ENCODE measurements at regions of chr12 and their contacts with region 1.

Region 1: GRCh38 chr12:111664961-111665865 is 20.5 kb downstream of the BRAP start:
- DNase-seq: no peak
- H3K4me3 ChIP-seq: no peak overlapping the region
- H3K27ac ChIP-seq: no peak overlapping the region
- H3K4me1 ChIP-seq: no peaks in the 10 kb centered on the region
- H3K27me3 ChIP-seq: no peaks in the 10 kb centered on the region
- CTCF ChIP-seq: no peak
- EP300 ChIP-seq: no peak
- POLR2A ChIP-seq: no peak

Region 2: DNA sequence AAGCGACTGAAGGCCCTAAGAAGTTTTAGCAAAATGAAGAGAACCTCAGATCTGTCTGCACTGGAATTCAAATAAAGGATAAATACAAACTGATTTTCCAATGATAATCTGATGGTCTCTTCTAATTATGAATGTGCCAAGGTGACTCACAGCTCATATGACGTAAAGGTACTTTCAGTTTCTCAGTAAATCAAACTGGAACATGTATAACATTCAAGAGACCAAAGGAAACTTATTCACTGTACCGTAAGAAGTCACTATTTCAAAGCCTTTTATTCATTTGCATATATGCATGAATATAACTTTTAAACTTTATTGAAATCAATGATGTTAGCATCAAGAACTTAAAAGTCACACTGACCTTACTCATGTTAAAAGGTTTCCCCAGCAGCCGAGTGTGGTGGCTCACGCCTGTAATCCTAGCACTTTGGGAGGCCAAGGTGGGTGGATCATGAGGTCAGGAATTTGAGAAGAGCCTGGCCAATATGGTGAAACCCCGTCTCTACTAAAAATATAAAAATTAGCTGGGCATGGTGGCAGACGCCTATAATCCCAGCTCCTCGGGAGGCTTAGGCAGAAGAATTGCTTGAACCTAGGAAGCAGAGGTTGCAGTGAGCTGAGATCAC is 118.3 kb before region 1 on chr12:
- intact Hi-C with region 1: loop called (anchors 10 kb)
- DNase-seq: no peak
- H3K4me3 ChIP-seq: no peak overlapping the region
- H3K27ac ChIP-seq: no peak overlapping the region
- H3K4me1 ChIP-seq: no peaks in the 10 kb centered on the region
- H3K27me3 ChIP-seq: no peaks in the 10 kb centered on the region
- CTCF ChIP-seq: no peak
- EP300 ChIP-seq: no peak
- POLR2A ChIP-seq: no peak

Region 3: DNA sequence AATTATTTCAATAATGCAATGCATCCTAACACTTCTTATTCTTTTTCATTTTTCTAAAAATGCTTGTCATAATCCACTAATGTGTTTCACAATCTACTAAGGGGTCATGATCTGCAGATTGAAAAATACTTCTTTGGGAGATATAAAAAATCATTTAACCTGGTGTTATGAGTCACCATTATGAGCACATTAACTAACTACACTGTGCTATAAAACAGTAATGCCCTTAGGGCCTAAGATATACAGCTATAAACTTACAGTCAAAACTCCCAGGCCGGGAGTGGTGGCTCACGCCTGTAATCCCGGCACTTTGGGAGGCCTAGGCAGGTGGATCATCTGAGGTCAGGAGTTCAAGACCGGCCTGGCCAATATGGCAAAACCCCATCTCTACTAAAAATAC is 80.3 kb before region 1 on chr12:
- intact Hi-C with region 1: no loop called
- DNase-seq: no peak
- H3K4me3 ChIP-seq: no peak overlapping the region
- H3K27ac ChIP-seq: no peak overlapping the region
- H3K4me1 ChIP-seq: peaks cover 0 to 51% (median 39%) of the 10 kb centered on the region in 4 donors
- H3K27me3 ChIP-seq: no peaks in the 10 kb centered on the region
- CTCF ChIP-seq: no peak
- EP300 ChIP-seq: no peak
- POLR2A ChIP-seq: no peak

Measured in sigmoid colon (tissue), 7 donors.